ENCODE measurements at regions of chr11 and their contacts with region 1.

Region 1: DNA sequence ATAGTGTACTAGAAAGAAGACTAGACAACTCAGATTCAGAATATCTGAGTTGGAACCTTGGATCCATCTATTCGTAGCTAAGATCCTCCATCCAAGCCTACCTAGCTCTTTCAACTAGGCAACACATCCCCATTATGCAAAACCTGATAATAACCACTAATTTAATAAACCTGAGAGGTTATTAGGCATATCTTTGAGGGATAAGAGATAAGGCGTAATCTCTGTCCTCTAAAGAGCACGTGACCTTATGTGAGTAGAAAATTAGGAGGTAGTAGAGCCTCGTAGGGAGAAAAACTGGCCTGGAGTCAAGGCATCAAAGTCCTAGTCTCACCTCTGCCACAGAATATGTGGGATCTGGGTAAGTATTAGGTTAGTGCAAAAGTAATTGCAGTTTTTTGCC is 87.8 kb downstream of the FAM168A start:
- DNase-seq: no peak
- H3K4me3 ChIP-seq: no peak overlapping the region
- H3K27ac ChIP-seq: no peak overlapping the region
- H3K4me1 ChIP-seq: no peaks in the 10 kb centered on the region
- H3K27me3 ChIP-seq: no peaks in the 10 kb centered on the region
- CTCF ChIP-seq: no peak

Region 2: GRCh38 chr11:71946144-71946571 is 1563.9 kb before region 1 on chr11:
- CTCF ChIA-PET with region 1: no interaction called
- POLR2A ChIA-PET with region 1: no interaction called
- intact Hi-C with region 1: no loop called
- DNase-seq: no peak
- H3K4me3 ChIP-seq: no peak overlapping the region
- H3K27ac ChIP-seq: no peak overlapping the region
- H3K4me1 ChIP-seq: no peaks in the 10 kb centered on the region
- H3K27me3 ChIP-seq: no peaks in the 10 kb centered on the region
- CTCF ChIP-seq: no peak

Region 3: GRCh38 chr11:73531386-73531785 is 21.3 kb after region 1 on chr11:
- CTCF ChIA-PET with region 1: no interaction called
- POLR2A ChIA-PET with region 1: interaction called, 15 read pairs
- intact Hi-C with region 1: no loop called
- DNase-seq: no peak
- H3K4me3 ChIP-seq: no peak overlapping the region
- H3K27ac ChIP-seq: no peak overlapping the region
- H3K4me1 ChIP-seq: peaks cover 53% of the 10 kb centered on the region
- H3K27me3 ChIP-seq: no peaks in the 10 kb centered on the region
- CTCF ChIP-seq: no peak

Measured in A673 (cell line).